Pancreas (tissue), 10 donors: ENCODE measurements at regions of chr7 and their contacts with region 1.

Region 1: GRCh38 chr7:128201051-128201689 is 39.9 kb upstream of the LEP start:
- DNase-seq: peak in 5 of 6 donors; percentile 15 to 79 (median 54)
- ATAC-seq: peak; percentile 35 to 71 (median 46)
- H3K4me3 ChIP-seq: peak overlapping the region in 3 of 4 donors; percentile 14 to 26 (median 16)
- H3K27ac ChIP-seq: no peak overlapping the region
- H3K4me1 ChIP-seq: peaks cover 0 to 11% (median 5%) of the 10 kb centered on the region in 3 donors
- H3K27me3 ChIP-seq: no peaks in the 10 kb centered on the region
- CTCF ChIP-seq: no peak

Region 2: DNA sequence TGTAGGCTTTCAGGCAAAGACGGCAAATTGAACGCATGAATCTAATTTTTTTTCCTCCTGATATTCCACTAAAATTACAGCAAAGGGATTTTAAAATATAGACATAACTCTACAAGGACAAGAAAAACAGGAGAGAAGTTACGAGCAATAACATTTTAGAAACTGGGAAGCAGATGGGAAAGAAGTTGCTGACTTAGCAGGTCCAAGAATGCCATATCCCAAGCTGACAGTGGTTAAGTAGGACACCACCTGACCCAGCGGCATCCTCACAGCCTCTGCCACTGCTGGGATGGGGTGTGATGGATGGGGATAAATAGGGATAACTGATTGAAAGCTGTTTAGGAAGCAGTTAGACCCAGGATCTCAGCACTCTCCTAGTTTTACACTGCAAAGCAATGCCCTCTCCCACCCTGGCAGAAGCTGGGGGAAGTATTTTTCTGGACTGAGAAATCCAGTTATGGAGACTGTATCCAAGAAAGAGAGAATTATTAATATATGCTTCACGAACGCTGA is 59.4 kb before region 1 on chr7:
- intact Hi-C with region 1: loop called in 1 of 3 experiments (anchors 5 kb)
- DNase-seq: no peak
- ATAC-seq: no peak
- H3K4me3 ChIP-seq: no peak overlapping the region
- H3K27ac ChIP-seq: no peak overlapping the region
- H3K4me1 ChIP-seq: no peaks in the 10 kb centered on the region
- H3K27me3 ChIP-seq: no peaks in the 10 kb centered on the region
- CTCF ChIP-seq: no peak